WTC11 (cell line): ENCODE measurements at regions of chr20 and their contacts with region 1.

Region 1: GRCh38 chr20:38214256-38215193 is 46.0 kb downstream of the KIAA1755 start:
- DNase-seq: no peak
- ATAC-seq: peak; percentile 41
- H3K4me3 Mint-ChIP-seq: no peak overlapping the region
- H3K27ac Mint-ChIP-seq: no peak overlapping the region
- H3K4me1 Mint-ChIP-seq: peaks cover 2% of the 10 kb centered on the region; the same call in 1 of the 2 replicates
- H3K27me3 Mint-ChIP-seq: no peaks in the 10 kb centered on the region
- CTCF ChIP-seq: no peak

Region 2: DNA sequence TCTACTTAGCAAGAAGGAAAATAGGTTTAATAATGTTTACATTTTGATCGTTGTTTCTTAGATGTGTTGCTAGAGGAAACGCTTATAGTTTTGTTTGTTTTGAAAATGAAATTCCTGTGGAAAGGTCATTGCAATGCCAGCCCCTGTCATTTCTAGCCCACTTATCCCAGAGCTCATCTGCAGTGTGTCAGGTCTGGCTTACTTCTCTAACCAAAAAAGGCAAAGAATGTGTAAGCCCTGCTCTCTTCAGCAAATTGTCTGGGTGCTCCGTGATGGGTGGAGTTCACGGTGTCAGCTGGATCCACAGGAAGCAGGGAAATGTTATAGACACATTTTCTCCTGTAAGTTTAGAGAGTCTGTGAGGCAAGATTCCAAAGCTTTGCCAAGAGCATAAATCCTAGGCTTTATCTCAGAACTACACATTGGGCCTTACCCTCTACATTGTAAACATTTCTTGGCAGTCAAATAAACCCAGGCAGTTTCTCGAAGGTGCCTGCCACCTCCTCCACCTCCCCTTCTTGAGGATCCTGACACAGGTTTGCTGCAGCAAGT is 130.0 kb before region 1 on chr20:
- CTCF ChIA-PET with region 1: no interaction called
- POLR2A ChIA-PET with region 1: interaction called, 10 read pairs
- DNase-seq: no peak
- ATAC-seq: no peak
- H3K4me3 Mint-ChIP-seq: no peak overlapping the region
- H3K27ac Mint-ChIP-seq: no peak overlapping the region
- H3K4me1 Mint-ChIP-seq: no peaks in the 10 kb centered on the region
- H3K27me3 Mint-ChIP-seq: no peaks in the 10 kb centered on the region
- CTCF ChIP-seq: no peak

Region 3: GRCh38 chr20:38357653-38358207 is 143.2 kb after region 1 on chr20:
- CTCF ChIA-PET with region 1: no interaction called
- POLR2A ChIA-PET with region 1: no interaction called
- DNase-seq: no peak
- ATAC-seq: no peak
- H3K4me3 Mint-ChIP-seq: no peak overlapping the region
- H3K27ac Mint-ChIP-seq: no peak overlapping the region
- H3K4me1 Mint-ChIP-seq: peaks cover 31% of the 10 kb centered on the region
- H3K27me3 Mint-ChIP-seq: no peaks in the 10 kb centered on the region
- CTCF ChIP-seq: no peak